Stomach (tissue), 19 donors: ENCODE measurements at regions of chr9 and their contacts with region 1.

Region 1: DNA sequence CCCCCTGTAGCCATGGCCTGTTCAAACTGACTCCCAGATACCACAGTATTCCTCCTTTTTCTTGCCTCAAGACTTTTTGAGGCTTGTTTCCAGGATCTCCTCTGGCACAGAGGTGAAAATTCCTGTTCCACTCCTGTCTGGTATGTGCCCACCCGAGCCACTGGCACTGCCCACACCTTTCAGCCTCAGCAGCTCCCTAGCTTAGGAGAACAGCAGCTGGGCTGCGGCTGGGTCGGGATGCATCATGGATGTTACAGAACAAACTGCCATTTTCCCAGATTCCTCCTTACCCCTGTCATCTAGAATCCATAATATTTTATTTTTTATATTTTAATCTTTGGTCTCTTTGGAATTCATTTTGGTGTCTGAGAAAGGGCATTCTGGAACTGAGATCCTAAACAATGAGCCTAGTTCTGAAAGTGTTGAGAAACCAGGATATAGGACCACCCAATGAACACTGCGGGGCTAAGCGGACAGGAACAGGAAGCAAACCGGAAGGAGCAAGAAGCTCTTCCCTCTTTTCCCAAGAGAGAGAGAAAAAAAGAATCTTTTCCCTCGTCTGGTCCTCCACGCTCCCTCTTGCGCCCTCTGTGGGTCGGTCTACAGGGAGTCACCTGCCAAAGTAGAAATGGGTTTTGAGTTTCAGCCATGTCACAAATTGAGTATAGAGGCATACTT is 12.5 kb downstream of the OR2S2 start:
- DNase-seq: peak; percentile 83 to 92
- H3K4me3 ChIP-seq: peak overlapping the region in 1 of 4 donors; percentile 18
- H3K27ac ChIP-seq: peak overlapping the region; percentile 8 to 56 (median 54)
- H3K4me1 ChIP-seq: peaks cover 0 to 31% (median 12%) of the 10 kb centered on the region in 4 donors
- H3K27me3 ChIP-seq: peaks cover 0 to 8% (median 0%) of the 10 kb centered on the region in 3 donors
- CTCF ChIP-seq: peak in 5 of 7 experiments; percentile 56 to 78 (median 74)
- EP300 ChIP-seq: no peak
- POLR2A ChIP-seq: no peak

Region 2: DNA sequence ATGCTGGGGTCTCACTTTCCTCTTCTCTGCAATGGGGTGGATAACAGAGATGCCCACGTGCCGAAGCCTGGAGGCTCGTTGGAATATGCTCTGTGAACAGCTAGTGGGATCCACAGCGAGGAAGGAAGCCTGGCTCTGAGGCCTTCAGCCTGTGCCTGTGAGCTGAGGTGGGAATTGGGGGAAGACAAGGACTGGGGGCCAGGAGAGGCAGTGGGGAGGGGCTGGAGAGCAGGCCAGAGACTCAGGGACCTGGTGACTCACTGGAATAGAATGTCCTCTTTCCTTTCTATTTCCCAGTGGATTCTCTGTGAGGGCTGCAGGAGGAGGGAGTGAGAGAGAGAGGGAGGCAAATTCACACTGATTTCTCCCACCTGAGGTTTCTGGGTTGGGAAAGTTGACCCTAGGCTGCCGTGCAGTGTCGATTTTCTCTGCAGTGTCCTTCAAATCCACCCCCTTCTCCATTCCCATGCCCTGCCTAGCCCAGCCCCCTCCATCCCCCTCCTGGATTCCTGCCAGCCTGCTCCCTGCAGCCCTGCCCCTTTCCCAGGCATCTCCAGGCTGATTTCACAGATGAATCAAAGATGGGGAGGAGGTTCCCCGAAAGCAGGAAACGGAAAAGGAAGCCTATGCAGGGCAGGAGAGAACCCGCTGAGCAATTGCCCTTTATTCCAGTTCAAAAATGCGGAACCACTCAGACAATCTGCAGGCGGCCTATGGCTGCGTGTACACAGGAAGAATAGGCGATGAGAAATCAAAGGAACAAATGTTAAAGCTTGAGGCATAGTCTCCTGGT is 37.6 kb before region 1 on chr9:
- intact Hi-C with region 1: loop called (anchors 5 kb)
- DNase-seq: peak; percentile 47 to 89
- H3K4me3 ChIP-seq: peak overlapping the region in 2 of 4 donors; percentile 7 to 9
- H3K27ac ChIP-seq: peak overlapping the region; percentile 73 to 94 (median 89)
- H3K4me1 ChIP-seq: peaks cover 66 to 93% (median 72%) of the 10 kb centered on the region in 4 donors
- H3K27me3 ChIP-seq: no peaks in the 10 kb centered on the region
- CTCF ChIP-seq: no peak
- EP300 ChIP-seq: no peak
- POLR2A ChIP-seq: no peak